Transverse colon (tissue), 4 donors: ENCODE measurements at regions of chr10 and their contacts with region 1.

Region 1: GRCh38 chr10:28241741-28242399 is 61.0 kb downstream of the MPP7 start:
- DNase-seq: peak; percentile 17
- H3K4me3 ChIP-seq: no peak overlapping the region
- H3K27ac ChIP-seq: no peak overlapping the region
- H3K4me1 ChIP-seq: peaks cover 0 to 5% (median 1%) of the 10 kb centered on the region in 4 donors
- H3K27me3 ChIP-seq: no peaks in the 10 kb centered on the region
- CTCF ChIP-seq: peak; percentile 85 to 97 (median 90)
- EP300 ChIP-seq: no peak
- POLR2A ChIP-seq: no peak

Region 2: GRCh38 chr10:27446091-27446918 is 795.6 kb before region 1 on chr10:
- in situ Hi-C with region 1: loop called in 1 of 4 experiments (anchors 25 kb)
- intact Hi-C with region 1: no loop called
- DNase-seq: no peak
- H3K4me3 ChIP-seq: no peak overlapping the region
- H3K27ac ChIP-seq: no peak overlapping the region
- H3K4me1 ChIP-seq: no peaks in the 10 kb centered on the region
- H3K27me3 ChIP-seq: no peaks in the 10 kb centered on the region
- CTCF ChIP-seq: peak; percentile 30 to 43 (median 34)
- EP300 ChIP-seq: no peak
- POLR2A ChIP-seq: no peak

Region 3: DNA sequence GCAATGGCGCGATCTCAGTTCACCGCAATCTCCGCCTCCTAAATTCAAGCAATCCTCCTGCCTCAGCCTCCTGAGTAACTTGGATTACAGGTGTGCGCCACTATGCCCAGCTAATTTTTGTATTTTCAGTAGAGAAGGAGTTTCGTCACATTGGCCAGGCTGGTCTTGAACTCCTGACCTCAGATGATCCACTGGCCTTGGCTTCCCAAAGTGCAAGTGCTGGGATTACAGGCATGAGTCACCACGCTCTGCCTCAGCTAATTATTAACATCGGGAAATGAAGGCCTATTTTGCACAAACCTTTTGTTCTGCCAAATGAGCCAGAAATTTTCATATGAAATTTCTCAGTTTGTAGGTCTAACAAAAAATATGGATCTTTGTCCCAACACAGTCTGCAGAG is 136.3 kb before region 1 on chr10:
- in situ Hi-C with region 1: no loop called
- intact Hi-C with region 1: no loop called
- DNase-seq: no peak
- H3K4me3 ChIP-seq: no peak overlapping the region
- H3K27ac ChIP-seq: no peak overlapping the region
- H3K4me1 ChIP-seq: no peaks in the 10 kb centered on the region
- H3K27me3 ChIP-seq: no peaks in the 10 kb centered on the region
- CTCF ChIP-seq: no peak
- EP300 ChIP-seq: no peak
- POLR2A ChIP-seq: no peak

Region 4: DNA sequence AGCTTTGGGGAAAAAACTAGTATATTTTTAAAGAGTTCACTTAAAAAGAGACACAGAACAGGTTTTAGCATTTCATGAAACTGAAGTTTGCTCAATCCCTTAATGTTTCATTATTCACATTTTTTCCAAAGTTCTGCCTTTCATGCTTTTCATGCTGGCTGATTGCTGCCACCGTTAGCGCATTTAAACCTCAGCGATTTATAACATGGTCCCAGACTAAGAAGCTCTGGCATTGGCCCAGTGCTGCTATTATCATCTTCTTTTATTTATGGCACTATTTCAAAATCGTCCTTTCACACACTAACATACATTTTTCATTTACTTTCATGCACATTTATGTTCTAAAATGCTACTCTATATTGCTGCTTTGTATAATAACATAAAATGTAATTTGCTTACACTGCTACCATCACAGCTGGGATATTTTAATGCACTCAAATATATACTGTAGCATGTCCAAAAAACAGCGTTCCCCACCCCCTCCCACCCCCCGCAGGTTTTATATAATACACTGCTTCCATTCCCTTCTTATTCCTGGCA is 80.9 kb before region 1 on chr10:
- in situ Hi-C with region 1: no loop called
- intact Hi-C with region 1: loop called (anchors 5 kb)
- DNase-seq: no peak
- H3K4me3 ChIP-seq: no peak overlapping the region
- H3K27ac ChIP-seq: no peak overlapping the region
- H3K4me1 ChIP-seq: no peaks in the 10 kb centered on the region
- H3K27me3 ChIP-seq: no peaks in the 10 kb centered on the region
- CTCF ChIP-seq: no peak
- EP300 ChIP-seq: no peak
- POLR2A ChIP-seq: no peak